ENCODE measurements at regions of chr10 and their contacts with region 1.

Region 1: GRCh38 chr10:122142641-122143237 is 128.4 kb upstream of the BTBD16 start:
- DNase-seq: peak in 41 of 42 donors; percentile 33 to 93 (median 78)

Region 2: DNA sequence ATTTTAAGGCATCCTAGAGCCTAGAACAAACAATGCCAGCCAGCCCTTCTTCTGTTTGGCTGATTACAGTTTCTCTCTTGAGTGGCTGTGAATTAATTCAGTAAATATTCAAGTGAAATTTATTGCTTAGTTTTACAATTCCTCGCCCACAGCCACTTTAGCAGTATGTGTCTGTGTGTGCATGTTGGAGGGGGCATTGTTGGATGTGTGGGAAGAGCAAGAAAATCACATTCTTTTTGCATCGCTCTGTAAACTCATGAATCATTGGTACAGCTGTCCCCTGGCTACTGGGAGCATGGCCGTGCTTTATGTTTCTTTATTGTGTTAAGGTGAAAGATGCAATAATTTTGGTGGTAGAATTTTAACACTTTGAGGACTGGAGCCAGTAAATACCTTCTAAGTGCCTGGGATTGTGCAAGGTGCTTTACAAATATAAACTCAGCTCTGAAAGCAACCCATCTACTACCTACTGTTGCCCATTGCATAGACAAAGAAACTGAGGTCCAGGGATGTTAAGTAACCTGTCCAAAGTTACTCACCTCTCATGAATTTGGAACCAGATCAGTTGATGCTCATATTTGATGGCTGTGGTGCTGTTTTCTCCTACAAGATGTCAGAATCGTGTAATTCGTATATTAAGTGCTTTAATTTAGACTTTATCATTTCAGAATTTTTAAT is 38.5 kb after region 1 on chr10:
- intact Hi-C with region 1: no loop called
- DNase-seq: peak in 1 of 42 donors; percentile 19

Region 3: DNA sequence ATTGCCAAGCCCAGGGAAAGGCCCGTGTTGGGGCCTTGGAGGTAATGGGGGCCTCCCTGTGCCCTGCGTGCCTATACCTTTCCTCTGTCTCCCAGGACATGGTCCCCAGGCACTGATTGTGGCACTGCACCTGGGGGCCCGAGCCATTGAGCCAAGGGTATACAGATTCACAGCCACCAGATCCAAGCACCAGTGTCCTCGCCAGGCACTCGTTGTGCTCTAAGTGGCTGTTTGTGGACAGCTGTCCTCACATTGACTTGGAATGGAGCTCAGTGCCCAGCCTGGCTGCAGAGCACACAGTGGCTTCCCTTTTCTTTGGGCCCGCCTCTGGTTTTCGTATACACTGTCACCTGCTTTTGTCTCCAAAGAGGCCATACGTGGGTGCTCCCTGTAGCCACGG is 56.3 kb after region 1 on chr10:
- intact Hi-C with region 1: no loop called
- DNase-seq: peak in 1 of 42 donors; percentile 26

Region 4: GRCh38 chr10:122213766-122214165 is 71.0 kb after region 1 on chr10:
- intact Hi-C with region 1: loop called (anchors 5 kb)
- DNase-seq: peak in 41 of 42 donors; percentile 27 to 86 (median 64)

Region 5: DNA sequence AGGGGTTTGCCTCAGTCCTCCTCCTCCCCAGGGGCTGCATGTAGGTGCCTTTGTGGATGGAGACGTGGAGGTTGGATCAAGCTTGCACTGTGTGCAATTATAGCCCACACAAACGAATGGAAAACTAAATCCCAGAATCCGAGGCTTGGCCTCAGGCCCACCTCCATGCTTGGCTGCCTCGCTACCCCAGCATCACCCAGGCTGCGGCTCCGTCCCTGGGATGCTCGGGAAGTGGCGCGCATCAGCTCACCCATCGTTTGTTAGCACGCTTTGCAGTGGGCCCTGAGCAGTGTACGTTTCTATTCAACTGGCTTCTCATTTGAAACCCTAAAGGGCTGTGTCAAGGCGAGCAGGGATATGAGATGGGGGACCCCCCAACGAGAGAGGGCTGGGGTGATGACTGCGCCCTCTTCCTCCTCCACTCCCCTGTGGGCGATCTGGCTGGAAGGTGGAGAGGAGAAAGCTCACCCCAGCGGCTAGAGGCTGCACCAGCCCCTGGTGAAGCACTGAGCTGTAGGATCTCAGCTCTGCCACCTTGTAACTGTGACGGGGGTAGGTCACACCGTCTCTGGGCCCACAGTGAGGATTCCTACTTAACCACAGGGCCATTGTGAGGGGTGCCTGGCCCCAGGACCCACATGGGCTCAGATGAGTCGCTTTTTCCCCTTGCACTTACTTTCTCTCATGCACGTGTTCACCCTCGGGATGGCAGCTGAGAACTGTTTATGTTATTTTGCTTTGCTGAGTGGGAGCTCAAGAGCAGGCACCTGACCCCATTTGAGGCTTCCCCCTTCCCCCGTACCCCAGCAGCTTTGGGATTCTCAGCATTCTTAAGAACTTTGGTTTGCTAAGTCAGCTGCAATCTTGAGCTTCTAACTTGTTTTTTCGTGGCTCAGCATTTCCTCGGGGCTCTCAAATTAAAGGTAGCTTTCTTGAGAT is 115.7 kb after region 1 on chr10:
- intact Hi-C with region 1: no loop called
- DNase-seq: peak in 1 of 42 donors; percentile 3

Region 6: DNA sequence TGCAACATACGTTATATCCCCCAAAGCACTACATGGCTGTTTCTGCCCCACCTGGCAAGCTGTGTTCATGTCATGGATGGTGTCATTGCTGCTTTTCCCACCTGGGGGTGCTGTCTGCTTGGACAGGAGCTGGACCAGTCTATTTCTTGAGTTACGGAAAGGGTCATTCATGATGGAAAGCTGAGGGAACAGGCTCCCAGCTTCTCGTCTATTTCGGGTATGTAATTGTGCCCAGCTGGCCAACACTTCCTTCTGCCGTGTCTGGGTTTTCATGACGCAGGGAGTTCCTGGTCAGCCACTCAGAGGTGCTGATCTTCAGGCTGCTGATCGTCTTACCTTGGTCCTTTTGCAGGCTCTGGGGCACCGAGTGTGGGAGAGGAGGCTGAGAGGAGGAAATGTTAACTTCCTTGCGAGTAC is 137.0 kb after region 1 on chr10:
- intact Hi-C with region 1: loop called (anchors 10 kb)
- DNase-seq: peak in 39 of 42 donors; percentile 32 to 89 (median 65)

Measured in head of caudate nucleus (tissue), 42 donors.